ENCODE measurements at regions of chr10 and their contacts with region 1.

Region 1: GRCh38 chr10:114970515-114970914 is 32.5 kb downstream of the TRUB1 start:
- DNase-seq: no peak
- H3K4me3 Mint-ChIP-seq: no peak overlapping the region
- H3K27ac Mint-ChIP-seq: no peak overlapping the region
- H3K4me1 Mint-ChIP-seq: peaks cover 9% of the 10 kb centered on the region
- H3K27me3 Mint-ChIP-seq: no peaks in the 10 kb centered on the region
- CTCF ChIP-seq: no peak

Region 2: DNA sequence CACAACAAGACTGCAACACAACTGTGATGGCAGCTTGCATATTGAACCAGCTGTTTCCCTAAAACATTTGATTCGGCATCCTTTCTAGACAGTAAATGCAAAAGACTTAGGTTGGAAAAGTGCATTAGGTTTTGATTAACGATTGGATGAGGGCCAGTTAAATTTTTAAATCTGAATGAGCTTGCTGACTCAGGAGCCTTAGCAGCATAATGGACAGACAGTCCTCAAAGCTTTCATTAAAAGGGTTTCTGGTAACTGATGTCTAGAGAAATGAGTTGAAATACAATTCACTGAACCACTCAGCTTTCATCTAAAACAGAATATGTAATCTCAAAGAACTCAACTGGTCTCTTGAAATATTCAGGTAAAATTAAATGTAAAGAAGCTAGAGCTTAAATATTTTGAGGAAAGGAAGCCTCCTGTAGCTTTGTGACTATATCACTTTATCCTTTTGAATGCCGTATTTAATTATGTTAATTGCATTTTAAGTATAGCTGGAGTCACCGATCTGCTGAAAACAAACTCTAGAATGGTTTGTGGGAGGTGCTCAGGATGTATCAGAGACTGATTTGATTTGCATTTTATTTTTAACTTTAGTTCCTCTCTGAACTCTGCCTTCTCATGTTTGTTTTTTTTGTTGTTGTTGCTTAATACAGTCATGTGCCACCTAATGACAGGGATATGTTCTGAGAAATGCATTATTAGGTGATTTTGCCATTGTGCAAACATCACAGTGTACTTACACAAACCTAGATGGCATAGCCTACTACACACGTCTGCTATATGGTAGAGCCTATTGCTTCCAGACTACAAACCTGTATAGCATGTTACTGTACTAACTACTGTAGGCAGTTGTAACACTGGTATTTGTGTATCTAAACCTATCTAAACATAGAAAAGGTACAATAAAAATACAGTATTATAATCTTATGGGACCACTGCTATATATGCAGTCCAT is 93.5 kb after region 1 on chr10:
- CTCF ChIA-PET with region 1: no interaction called
- intact Hi-C with region 1: no loop called
- DNase-seq: no peak
- H3K4me3 Mint-ChIP-seq: no peak overlapping the region
- H3K27ac Mint-ChIP-seq: no peak overlapping the region
- H3K4me1 Mint-ChIP-seq: peaks cover 8% of the 10 kb centered on the region
- H3K27me3 Mint-ChIP-seq: peaks cover 33% of the 10 kb centered on the region
- CTCF ChIP-seq: no peak

Region 3: GRCh38 chr10:115118346-115118745 is 147.8 kb after region 1 on chr10:
- CTCF ChIA-PET with region 1: no interaction called
- intact Hi-C with region 1: loop called (anchors 5 kb)
- DNase-seq: no peak
- H3K4me3 Mint-ChIP-seq: no peak overlapping the region
- H3K27ac Mint-ChIP-seq: no peak overlapping the region
- H3K4me1 Mint-ChIP-seq: no peaks in the 10 kb centered on the region
- H3K27me3 Mint-ChIP-seq: no peaks in the 10 kb centered on the region
- CTCF ChIP-seq: no peak